ENCODE measurements at regions of chr7 and their contacts with region 1.

Region 1: DNA sequence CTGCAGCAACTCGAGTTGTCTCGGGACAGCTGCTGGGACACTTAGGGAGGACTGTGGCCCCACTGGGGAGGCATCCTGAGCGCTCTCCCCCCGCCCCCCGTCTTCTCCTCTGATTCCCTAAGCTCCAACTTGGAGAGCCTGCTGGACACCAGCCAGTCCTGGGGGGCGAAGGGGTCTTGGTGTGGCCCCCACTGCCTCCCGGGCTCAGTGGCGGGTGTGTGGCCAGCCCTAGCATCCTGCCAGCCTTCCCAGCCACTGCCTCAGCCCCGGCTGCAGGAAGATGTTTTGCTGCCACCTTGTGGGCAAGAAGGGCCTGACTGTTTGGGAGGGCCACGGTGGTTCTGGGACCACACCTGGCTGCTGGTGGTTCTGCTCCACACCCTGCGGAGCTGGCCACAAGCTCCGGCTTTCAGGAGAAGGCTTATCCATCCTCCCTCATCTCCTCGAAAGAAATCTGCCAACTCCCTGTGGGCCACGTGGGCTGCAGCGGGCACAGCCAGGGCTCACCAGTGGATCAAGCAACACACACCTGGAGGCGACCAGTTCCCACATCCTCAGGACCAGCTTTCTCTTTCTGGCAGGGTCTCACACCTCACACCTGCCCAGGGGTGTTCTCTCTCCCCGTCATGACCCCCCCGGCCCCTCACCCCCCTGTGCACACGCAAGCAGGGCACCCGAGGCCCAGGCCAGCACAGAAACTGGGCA is 24.8 kb downstream of the AGAP3 start:
- DNase-seq: peak; percentile 82
- H3K4me3 Mint-ChIP-seq: no peak overlapping the region
- H3K27ac Mint-ChIP-seq: no peak overlapping the region
- H3K4me1 Mint-ChIP-seq: peaks cover 5% of the 10 kb centered on the region
- H3K27me3 Mint-ChIP-seq: no peaks in the 10 kb centered on the region
- CTCF ChIP-seq: peak; percentile 77

Region 2: DNA sequence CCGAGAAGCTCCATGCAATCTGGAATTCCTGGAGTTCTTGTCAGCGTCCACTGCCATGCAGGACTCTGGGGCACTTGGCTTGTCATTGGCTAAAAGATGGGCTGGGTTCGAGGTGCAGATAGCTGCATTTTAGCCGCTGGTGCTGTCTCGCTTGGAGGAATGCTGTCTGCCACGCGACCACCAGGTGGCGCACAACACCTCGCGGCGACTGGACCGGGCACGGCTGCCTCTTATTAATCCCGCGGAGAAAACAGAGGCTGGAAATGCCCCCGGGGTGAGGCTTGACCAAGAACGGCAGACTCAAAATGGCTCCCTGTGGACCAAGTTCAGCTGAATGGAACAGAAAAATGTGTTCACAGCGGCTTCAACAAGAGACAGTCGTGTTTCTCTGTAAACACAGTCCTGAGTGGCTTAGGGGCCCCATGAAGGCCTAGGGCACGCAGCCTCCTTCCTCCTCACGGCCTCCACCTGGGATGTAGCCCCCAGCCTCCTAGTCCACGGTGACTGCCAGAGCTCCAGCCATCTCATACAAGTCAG is 212.6 kb before region 1 on chr7:
- CTCF ChIA-PET with region 1: no interaction called
- intact Hi-C with region 1: loop called (anchors 5 kb)
- DNase-seq: peak; percentile 89
- H3K4me3 Mint-ChIP-seq: peak overlapping the region; percentile 22
- H3K27ac Mint-ChIP-seq: no peak overlapping the region
- H3K4me1 Mint-ChIP-seq: peaks cover 66% of the 10 kb centered on the region
- H3K27me3 Mint-ChIP-seq: peaks cover 29% of the 10 kb centered on the region
- CTCF ChIP-seq: peak; percentile 94

Region 3: DNA sequence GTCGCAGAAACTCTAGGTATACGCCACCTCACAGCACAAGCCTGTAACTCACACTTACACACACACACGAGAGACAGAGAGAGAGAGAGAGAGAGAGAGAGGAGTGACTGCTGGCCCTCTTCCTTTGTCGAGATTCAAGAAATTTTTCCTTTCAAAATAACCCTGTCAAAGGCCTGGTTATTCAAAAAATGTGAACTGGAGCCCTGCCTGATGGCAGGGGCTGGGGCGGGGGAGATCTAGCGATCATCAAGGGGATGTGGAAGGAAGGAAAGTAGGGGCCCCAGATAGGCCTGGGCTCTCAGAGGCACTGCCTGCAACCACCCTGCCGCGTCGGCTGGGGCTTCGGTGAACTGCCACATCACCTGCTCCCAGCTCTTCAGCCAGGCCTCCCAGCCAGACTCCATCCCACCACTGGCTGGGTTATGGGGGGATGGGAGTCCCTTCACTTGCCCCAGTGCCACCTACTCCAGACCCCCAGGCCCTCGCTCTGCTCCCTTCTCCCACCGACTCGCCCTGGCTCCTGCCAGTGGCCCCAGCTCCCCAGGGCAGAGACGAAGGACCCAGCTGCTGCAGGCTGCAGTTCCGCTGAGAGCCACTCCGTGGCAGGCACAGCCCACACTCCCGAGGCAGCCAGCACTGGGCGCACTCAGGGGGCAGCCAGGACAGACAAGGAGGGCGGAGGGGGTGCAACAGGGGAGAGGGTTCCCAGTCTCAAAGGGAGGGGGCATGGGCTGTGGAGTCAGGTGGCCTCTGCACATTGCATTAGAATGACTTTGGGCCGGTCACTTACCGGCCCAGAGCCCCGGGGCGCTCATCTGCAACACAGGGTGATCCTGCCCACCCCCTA is 148.3 kb before region 1 on chr7:
- CTCF ChIA-PET with region 1: interaction called, 4 read pairs
- intact Hi-C with region 1: loop called (anchors 2 kb)
- DNase-seq: peak; percentile 74
- H3K4me3 Mint-ChIP-seq: no peak overlapping the region
- H3K27ac Mint-ChIP-seq: no peak overlapping the region
- H3K4me1 Mint-ChIP-seq: no peaks in the 10 kb centered on the region
- H3K27me3 Mint-ChIP-seq: peaks cover 89% of the 10 kb centered on the region
- CTCF ChIP-seq: peak; percentile 85

Region 4: GRCh38 chr7:151028131-151028947 is 82.8 kb before region 1 on chr7 and contains the start of gene ABCB8:
- CTCF ChIA-PET with region 1: interaction called, 5 read pairs
- intact Hi-C with region 1: loop called (anchors 2 kb)
- DNase-seq: peak; percentile 99
- H3K4me3 Mint-ChIP-seq: peak within 1 kb of the TSS; percentile 82
- H3K27ac Mint-ChIP-seq: peak within 1 kb of the TSS; percentile 94
- H3K4me1 Mint-ChIP-seq: peaks cover 55% of the 10 kb centered on the region
- H3K27me3 Mint-ChIP-seq: no peaks in the 10 kb centered on the region
- CTCF ChIP-seq: peak; percentile 60
- total RNA-seq, gene ABCB8: 40.2 and 42.3 TPM in 2 replicates

Region 5: GRCh38 chr7:151087245-151088018 is 23.7 kb before region 1 on chr7:
- CTCF ChIA-PET with region 1: interaction called, 6 read pairs
- intact Hi-C with region 1: loop called (anchors 1 kb)
- DNase-seq: peak; percentile 59
- H3K4me3 Mint-ChIP-seq: peak overlapping the region; percentile 87
- H3K27ac Mint-ChIP-seq: no peak overlapping the region
- H3K4me1 Mint-ChIP-seq: peaks cover 42% of the 10 kb centered on the region
- H3K27me3 Mint-ChIP-seq: no peaks in the 10 kb centered on the region
- CTCF ChIP-seq: no peak

Region 6: GRCh38 chr7:151210087-151210854 is 99.2 kb after region 1 on chr7 and contains the start of gene H2BK1:
- CTCF ChIA-PET with region 1: no interaction called
- intact Hi-C with region 1: no loop called
- DNase-seq: no peak
- H3K4me3 Mint-ChIP-seq: no peak within 1 kb of the TSS
- H3K27ac Mint-ChIP-seq: no peak within 1 kb of the TSS
- H3K4me1 Mint-ChIP-seq: no peaks in the 10 kb centered on the region
- H3K27me3 Mint-ChIP-seq: no peaks in the 10 kb centered on the region
- CTCF ChIP-seq: no peak
- total RNA-seq, gene H2BK1: not detected in 2 replicates

Region 7: GRCh38 chr7:151223754-151224153 is 112.7 kb after region 1 on chr7:
- CTCF ChIA-PET with region 1: no interaction called
- intact Hi-C with region 1: no loop called
- DNase-seq: no peak
- H3K4me3 Mint-ChIP-seq: no peak overlapping the region
- H3K27ac Mint-ChIP-seq: no peak overlapping the region
- H3K4me1 Mint-ChIP-seq: peaks cover 12% of the 10 kb centered on the region
- H3K27me3 Mint-ChIP-seq: no peaks in the 10 kb centered on the region
- CTCF ChIP-seq: no peak

Region 8: DNA sequence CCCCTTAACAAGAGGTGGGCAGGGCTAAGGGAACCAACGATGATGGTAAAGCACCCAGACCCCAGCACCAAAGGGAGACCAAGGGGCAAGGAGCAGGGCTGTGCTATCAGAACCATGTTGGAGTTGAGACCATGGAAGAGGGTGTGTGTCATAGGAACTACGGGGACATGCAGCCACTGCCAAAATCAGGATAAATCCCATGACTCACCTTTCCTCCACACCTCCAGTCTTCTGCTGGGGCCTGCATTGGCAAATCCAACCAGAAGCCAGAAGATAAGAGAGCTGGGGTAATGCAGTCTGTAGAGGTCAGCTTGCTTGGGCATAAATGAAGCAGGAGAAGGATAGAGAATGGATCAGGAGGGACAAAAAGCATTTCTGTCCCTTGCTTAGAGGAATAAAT is 180.1 kb after region 1 on chr7:
- CTCF ChIA-PET with region 1: no interaction called
- intact Hi-C with region 1: no loop called
- DNase-seq: no peak
- H3K4me3 Mint-ChIP-seq: no peak overlapping the region
- H3K27ac Mint-ChIP-seq: no peak overlapping the region
- H3K4me1 Mint-ChIP-seq: no peaks in the 10 kb centered on the region
- H3K27me3 Mint-ChIP-seq: peaks cover 37% of the 10 kb centered on the region
- CTCF ChIP-seq: no peak

Measured in Calu3 (cell line).